ENCODE measurements at regions of chr20 and their contacts with region 1.

Region 1: GRCh38 chr20:31879143-31879987 is 8.9 kb downstream of the TTLL9 start:
- DNase-seq: peak; percentile 90
- CTCF ChIP-seq: no peak

Region 2: GRCh38 chr20:31856516-31856915 is 22.8 kb before region 1 on chr20:
- CTCF ChIA-PET with region 1: interaction called, 22 read pairs
- POLR2A ChIA-PET with region 1: no interaction called
- DNase-seq: no peak
- CTCF ChIP-seq: no peak